Endothelial cell of umbilical vein (primary cell): ENCODE measurements at regions of chr10 and their contacts with region 1.

Region 1: GRCh38 chr10:6275022-6275997 is 72.6 kb downstream of the PFKFB3 start:
- DNase-seq: peak; percentile 94
- H3K4me3 ChIP-seq: peak overlapping the region in 1 of 3 experiments; percentile 20
- H3K27ac ChIP-seq: peak overlapping the region; percentile 88
- H3K4me1 ChIP-seq: peaks cover 16% of the 10 kb centered on the region
- H3K27me3 ChIP-seq: no peaks in the 10 kb centered on the region
- CTCF ChIP-seq: peak in 1 of 2 donors; percentile 3
- POLR2A ChIP-seq: peak; percentile 42

Region 2: GRCh38 chr10:6239213-6239991 is 35.9 kb before region 1 on chr10:
- CTCF ChIA-PET with region 1: no interaction called
- POLR2A ChIA-PET with region 1: no interaction called
- dilution Hi-C with region 1: no loop called
- intact Hi-C with region 1: loop called (anchors 1 kb)
- DNase-seq: peak; percentile 94
- H3K4me3 ChIP-seq: no peak overlapping the region
- H3K27ac ChIP-seq: peak overlapping the region; percentile 50
- H3K4me1 ChIP-seq: peaks cover 13% of the 10 kb centered on the region
- H3K27me3 ChIP-seq: no peaks in the 10 kb centered on the region
- CTCF ChIP-seq: no peak
- POLR2A ChIP-seq: no peak